ENCODE measurements at regions of chr14 and their contacts with region 1.

Region 1: GRCh38 chr14:56491299-56492285 is 88.0 kb upstream of the TMEM260 start:
- DNase-seq: peak; percentile 87
- ATAC-seq: peak; percentile 72
- H3K4me3 ChIP-seq: no peak overlapping the region
- H3K27ac ChIP-seq: no peak overlapping the region
- H3K4me1 ChIP-seq: no peaks in the 10 kb centered on the region
- H3K27me3 ChIP-seq: peaks cover 45% of the 10 kb centered on the region
- CTCF ChIP-seq: peak; percentile 97

Region 2: DNA sequence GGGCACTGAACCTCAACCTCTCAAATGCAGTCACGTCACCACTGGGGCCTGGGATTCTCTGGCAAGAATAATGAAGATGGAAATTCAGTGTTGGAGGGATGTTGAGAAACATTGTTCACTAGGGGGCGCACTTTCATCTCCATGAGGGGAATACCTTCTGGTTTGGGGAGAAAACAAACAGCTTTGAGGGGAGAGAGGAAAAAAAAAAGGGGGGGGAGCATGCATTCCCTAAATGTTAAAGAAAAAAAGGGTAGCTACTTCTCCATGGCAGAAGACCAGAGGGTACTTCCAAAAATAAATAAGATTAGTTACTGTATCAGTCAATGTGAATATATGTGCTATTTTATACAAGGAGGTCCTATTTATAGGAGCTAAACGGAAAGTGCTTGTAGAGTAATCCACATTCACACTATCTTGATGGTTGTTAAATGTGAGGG is 1045.4 kb before region 1 on chr14:
- CTCF ChIA-PET with region 1: no interaction called
- POLR2A ChIA-PET with region 1: no interaction called
- intact Hi-C with region 1: loop called (anchors 5 kb)
- DNase-seq: peak; percentile 99
- ATAC-seq: peak; percentile 7
- H3K4me3 ChIP-seq: peak overlapping the region; percentile 22; the same call in 1 of the 2 replicates
- H3K27ac ChIP-seq: peak overlapping the region; percentile 81
- H3K4me1 ChIP-seq: peaks cover 54% of the 10 kb centered on the region
- H3K27me3 ChIP-seq: no peaks in the 10 kb centered on the region
- CTCF ChIP-seq: peak; percentile 99

Region 3: DNA sequence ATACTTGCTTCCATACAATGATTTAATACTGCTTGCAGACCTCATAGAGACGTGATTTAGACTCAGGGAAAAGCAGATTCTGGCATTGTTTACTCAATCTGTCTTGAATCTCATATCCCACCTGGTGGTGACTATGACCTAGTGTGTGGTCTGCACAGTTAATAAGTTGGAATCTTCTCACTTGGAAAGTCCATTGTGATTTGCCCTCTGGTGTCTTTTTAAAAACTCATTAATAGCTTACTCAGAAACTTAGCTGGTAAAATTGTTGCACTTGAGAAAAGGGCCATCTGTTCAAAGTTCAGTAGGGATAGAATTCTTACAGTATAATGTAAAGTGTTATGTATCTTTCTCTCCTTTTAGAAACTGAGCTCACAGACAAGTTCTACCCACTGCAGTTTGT is 267.4 kb before region 1 on chr14:
- CTCF ChIA-PET with region 1: no interaction called
- POLR2A ChIA-PET with region 1: no interaction called
- intact Hi-C with region 1: no loop called
- DNase-seq: no peak
- ATAC-seq: peak; percentile 31; the same call in 1 of the 2 replicates
- H3K4me3 ChIP-seq: no peak overlapping the region
- H3K27ac ChIP-seq: no peak overlapping the region
- H3K4me1 ChIP-seq: no peaks in the 10 kb centered on the region
- H3K27me3 ChIP-seq: peaks cover 90% of the 10 kb centered on the region
- CTCF ChIP-seq: no peak

Region 4: GRCh38 chr14:56569174-56569573 is 77.6 kb after region 1 on chr14:
- CTCF ChIA-PET with region 1: no interaction called
- POLR2A ChIA-PET with region 1: no interaction called
- intact Hi-C with region 1: no loop called
- DNase-seq: no peak
- ATAC-seq: no peak
- H3K4me3 ChIP-seq: no peak overlapping the region
- H3K27ac ChIP-seq: no peak overlapping the region
- H3K4me1 ChIP-seq: no peaks in the 10 kb centered on the region
- H3K27me3 ChIP-seq: peaks cover 55% of the 10 kb centered on the region
- CTCF ChIP-seq: no peak

Region 5: DNA sequence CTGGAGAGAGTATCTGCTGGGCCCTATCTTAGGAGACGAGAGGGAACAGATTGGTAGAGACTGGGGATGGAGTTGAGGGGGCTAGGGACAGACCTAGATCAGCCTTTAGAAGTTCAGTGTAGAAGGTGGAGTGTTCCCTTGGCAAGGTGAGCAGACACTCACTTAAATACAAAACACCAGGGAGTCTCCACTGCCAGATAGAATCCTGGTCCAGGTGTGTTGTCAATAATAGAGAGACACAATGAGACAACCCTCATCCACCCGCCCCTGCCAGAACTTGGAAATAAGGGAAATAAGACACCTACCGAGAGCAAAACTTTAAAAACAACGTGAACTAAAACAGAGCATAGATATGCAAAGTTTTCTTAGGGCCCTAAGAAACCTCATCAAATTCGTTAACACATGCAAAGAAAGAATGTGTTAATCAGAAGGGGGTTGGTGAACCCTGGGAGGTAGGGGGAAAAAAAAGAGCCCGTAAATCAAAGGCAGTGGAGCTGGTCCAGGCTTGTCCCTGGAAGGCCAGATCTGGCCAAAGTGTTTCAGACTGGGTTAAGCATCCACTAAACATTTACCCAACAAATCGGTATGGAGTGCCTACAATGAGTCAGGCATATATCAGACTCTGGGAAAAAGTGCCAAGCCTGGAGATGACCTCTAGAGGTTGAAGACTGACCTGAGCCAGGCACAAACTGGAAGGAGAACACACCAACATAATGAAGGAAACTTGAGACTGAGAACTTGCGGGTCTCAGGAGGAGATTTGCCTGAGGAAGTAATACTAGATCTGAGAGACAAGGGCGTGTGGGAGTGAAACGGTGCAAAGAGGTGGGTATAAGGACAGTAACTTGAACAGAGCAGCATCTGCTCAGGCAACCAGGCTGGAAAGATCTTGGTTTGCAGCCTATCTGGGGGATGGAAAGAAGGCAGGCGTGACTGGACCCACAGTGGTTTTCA is 355.7 kb after region 1 on chr14:
- CTCF ChIA-PET with region 1: no interaction called
- POLR2A ChIA-PET with region 1: no interaction called
- intact Hi-C with region 1: no loop called
- DNase-seq: no peak
- ATAC-seq: no peak
- H3K4me3 ChIP-seq: no peak overlapping the region
- H3K27ac ChIP-seq: no peak overlapping the region
- H3K4me1 ChIP-seq: no peaks in the 10 kb centered on the region
- H3K27me3 ChIP-seq: peaks cover 81% of the 10 kb centered on the region
- CTCF ChIP-seq: no peak

Region 6: DNA sequence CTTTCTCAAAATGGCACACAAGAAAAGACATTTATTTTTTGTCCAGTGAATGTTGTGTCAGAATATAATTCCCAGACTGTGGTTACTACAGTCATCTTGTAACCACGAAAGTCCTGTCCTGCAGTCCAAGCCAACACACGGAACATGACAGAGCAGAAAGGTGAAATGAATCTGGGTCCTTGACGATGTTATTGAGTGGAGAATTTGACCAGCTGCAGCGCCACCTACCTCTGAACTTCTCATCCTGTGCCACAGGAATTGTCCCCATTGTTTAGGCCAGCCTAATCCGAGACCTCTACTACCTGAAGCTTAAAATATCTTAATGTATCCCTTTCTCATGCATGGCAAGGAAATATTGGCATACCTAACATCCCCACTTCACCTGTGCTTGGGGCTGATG is 382.8 kb after region 1 on chr14:
- CTCF ChIA-PET with region 1: no interaction called
- POLR2A ChIA-PET with region 1: no interaction called
- intact Hi-C with region 1: loop called (anchors 5 kb)
- DNase-seq: peak; percentile 70
- ATAC-seq: peak; percentile 86
- H3K4me3 ChIP-seq: no peak overlapping the region
- H3K27ac ChIP-seq: no peak overlapping the region
- H3K4me1 ChIP-seq: no peaks in the 10 kb centered on the region
- H3K27me3 ChIP-seq: peaks cover 44% of the 10 kb centered on the region
- CTCF ChIP-seq: peak; percentile 93

Region 7: GRCh38 chr14:57189070-57189469 is 697.5 kb after region 1 on chr14:
- CTCF ChIA-PET with region 1: no interaction called
- POLR2A ChIA-PET with region 1: no interaction called
- intact Hi-C with region 1: loop called (anchors 2 kb)
- DNase-seq: peak; percentile 67
- ATAC-seq: peak; percentile 69
- H3K4me3 ChIP-seq: no peak overlapping the region
- H3K27ac ChIP-seq: no peak overlapping the region
- H3K4me1 ChIP-seq: no peaks in the 10 kb centered on the region
- H3K27me3 ChIP-seq: peaks cover 86% of the 10 kb centered on the region
- CTCF ChIP-seq: peak; percentile 77

Region 8: GRCh38 chr14:57317316-57317715 is 825.7 kb after region 1 on chr14:
- CTCF ChIA-PET with region 1: no interaction called
- POLR2A ChIA-PET with region 1: no interaction called
- intact Hi-C with region 1: loop called (anchors 1 kb)
- DNase-seq: peak; percentile 99
- ATAC-seq: peak; percentile 89
- H3K4me3 ChIP-seq: no peak overlapping the region
- H3K27ac ChIP-seq: no peak overlapping the region
- H3K4me1 ChIP-seq: no peaks in the 10 kb centered on the region
- H3K27me3 ChIP-seq: peaks cover 44% of the 10 kb centered on the region
- CTCF ChIP-seq: peak; percentile 100

Measured in PC-3 (cell line).